Naive thymus-derived CD4-positive, alpha-beta T cell (primary cell): ENCODE measurements at regions of chr16 and their contacts with region 1.

Region 1: GRCh38 chr16:14632692-14633569 is at the start of gene BFAR:
- DNase-seq: peak; percentile 95 to 99 (median 99)
- ATAC-seq: peak; percentile 85
- H3K4me3 ChIP-seq: peak within 1 kb of the TSS; percentile 89
- H3K4me3 Mint-ChIP-seq: peak within 1 kb of the TSS; percentile 92 to 100 (median 100)
- H3K27ac ChIP-seq: peak within 1 kb of the TSS; percentile 93
- H3K27ac Mint-ChIP-seq: peak within 1 kb of the TSS; percentile 94 to 100 (median 99)
- H3K4me1 ChIP-seq: peaks cover 38 to 45% of the 10 kb centered on the region in 2 donors
- H3K4me1 Mint-ChIP-seq: peaks cover 32 to 76% (median 68%) of the 10 kb centered on the region in 7 donors
- H3K27me3 ChIP-seq: no peaks in the 10 kb centered on the region
- H3K27me3 Mint-ChIP-seq: no peaks in the 10 kb centered on the region
- total RNA-seq, gene BFAR: 43.9 to 82.0 (median 66.0) TPM

Region 2: GRCh38 chr16:14070877-14071575 is 561.9 kb before region 1 on chr16 and contains the start of gene MRTFB:
- CTCF ChIA-PET with region 1: no interaction called
- POLR2A ChIA-PET with region 1: no interaction called
- intact Hi-C with region 1: loop called (anchors 1 to 5 kb)
- DNase-seq: peak; percentile 72 to 93 (median 85)
- ATAC-seq: peak; percentile 88
- H3K4me3 ChIP-seq: peak within 1 kb of the TSS; percentile 94
- H3K4me3 Mint-ChIP-seq: peak within 1 kb of the TSS; percentile 82 to 93 (median 90)
- H3K27ac ChIP-seq: peak within 1 kb of the TSS; percentile 79
- H3K27ac Mint-ChIP-seq: peak within 1 kb of the TSS; percentile 82 to 95 (median 87)
- H3K4me1 ChIP-seq: peaks cover 6 to 8% of the 10 kb centered on the region in 2 donors
- H3K4me1 Mint-ChIP-seq: peaks cover 8 to 35% (median 20%) of the 10 kb centered on the region in 7 donors
- H3K27me3 ChIP-seq: no peaks in the 10 kb centered on the region
- H3K27me3 Mint-ChIP-seq: peaks cover 0 to 6% (median 4%) of the 10 kb centered on the region in 5 donors
- total RNA-seq, gene MRTFB: 18.7 to 33.2 (median 27.6) TPM

Region 3: GRCh38 chr16:14310519-14310991 is 322.4 kb before region 1 on chr16:
- CTCF ChIA-PET with region 1: no interaction called
- POLR2A ChIA-PET with region 1: interaction called, 8 read pairs
- intact Hi-C with region 1: loop called in 1 of 2 experiments (anchors 2 kb)
- DNase-seq: no peak
- ATAC-seq: no peak
- H3K4me3 ChIP-seq: no peak overlapping the region
- H3K4me3 Mint-ChIP-seq: peak overlapping the region in 2 of 10 donors; percentile 77 to 86
- H3K27ac ChIP-seq: no peak overlapping the region
- H3K27ac Mint-ChIP-seq: peak overlapping the region in 2 of 9 donors; percentile 25 to 26
- H3K4me1 ChIP-seq: peaks cover 0 to 43% of the 10 kb centered on the region in 2 donors
- H3K4me1 Mint-ChIP-seq: peaks cover 6 to 55% (median 45%) of the 10 kb centered on the region in 7 donors
- H3K27me3 ChIP-seq: no peaks in the 10 kb centered on the region
- H3K27me3 Mint-ChIP-seq: peaks cover 0 to 7% (median 0%) of the 10 kb centered on the region in 5 donors

Region 4: DNA sequence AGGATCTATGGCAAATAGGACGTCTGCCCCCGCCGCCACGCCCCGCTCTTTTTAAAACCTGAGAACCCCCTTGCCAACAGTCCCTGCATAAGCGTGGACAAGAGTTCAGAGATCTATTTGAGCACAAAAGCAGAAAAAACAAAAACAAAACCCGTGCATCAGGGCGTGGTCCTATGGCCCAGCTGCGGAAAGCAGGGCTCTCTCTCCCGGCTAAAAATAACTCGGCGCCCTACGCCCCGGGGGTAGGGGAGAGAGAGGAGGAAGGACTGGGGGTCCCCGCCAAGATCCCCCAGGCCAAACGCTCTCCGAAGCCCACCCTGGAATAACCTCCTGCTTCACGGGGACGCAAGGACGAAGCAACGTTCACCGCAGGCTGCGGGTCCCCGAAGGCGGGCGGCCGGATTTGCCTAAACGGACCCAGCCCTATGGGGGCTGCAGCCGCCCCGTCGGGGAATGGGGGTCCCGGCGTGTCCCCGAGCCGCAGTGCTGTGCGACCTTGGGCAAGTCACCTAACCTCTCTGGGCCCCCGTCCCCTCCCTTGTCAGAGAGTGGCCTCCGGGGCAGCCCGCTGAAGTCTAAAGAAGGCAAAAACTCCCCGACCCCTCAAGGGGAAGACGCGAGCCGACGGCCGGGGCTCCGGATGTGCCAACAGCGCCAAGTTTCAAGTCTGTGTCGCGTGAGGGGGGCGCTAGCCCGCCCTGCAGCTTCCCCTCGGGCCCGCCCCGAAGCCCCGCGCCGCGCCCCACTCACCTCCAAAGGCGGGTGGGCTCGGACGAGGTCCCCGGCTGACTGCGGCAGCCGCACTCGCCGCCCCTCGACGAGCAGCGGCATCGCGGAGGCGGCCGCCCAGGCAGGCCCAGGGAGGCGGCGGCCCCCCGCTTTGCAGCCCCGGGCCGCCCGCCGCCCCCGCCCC is 422.5 kb after region 1 on chr16:
- CTCF ChIA-PET with region 1: no interaction called
- POLR2A ChIA-PET with region 1: no interaction called
- intact Hi-C with region 1: loop called (anchors 1 kb)
- DNase-seq: peak in 3 of 9 donors; percentile 7 to 85 (median 77)
- ATAC-seq: peak; percentile 75
- H3K4me3 ChIP-seq: peak overlapping the region; percentile 83
- H3K4me3 Mint-ChIP-seq: peak overlapping the region; percentile 76 to 93 (median 88)
- H3K27ac ChIP-seq: peak overlapping the region; percentile 80
- H3K27ac Mint-ChIP-seq: peak overlapping the region; percentile 7 to 93 (median 78)
- H3K4me1 ChIP-seq: peaks cover 8 to 12% of the 10 kb centered on the region in 2 donors
- H3K4me1 Mint-ChIP-seq: peaks cover 12 to 28% (median 21%) of the 10 kb centered on the region in 7 donors
- H3K27me3 ChIP-seq: no peaks in the 10 kb centered on the region
- H3K27me3 Mint-ChIP-seq: no peaks in the 10 kb centered on the region